ENCODE measurements at regions of chr1 and their contacts with region 1.

Region 1: DNA sequence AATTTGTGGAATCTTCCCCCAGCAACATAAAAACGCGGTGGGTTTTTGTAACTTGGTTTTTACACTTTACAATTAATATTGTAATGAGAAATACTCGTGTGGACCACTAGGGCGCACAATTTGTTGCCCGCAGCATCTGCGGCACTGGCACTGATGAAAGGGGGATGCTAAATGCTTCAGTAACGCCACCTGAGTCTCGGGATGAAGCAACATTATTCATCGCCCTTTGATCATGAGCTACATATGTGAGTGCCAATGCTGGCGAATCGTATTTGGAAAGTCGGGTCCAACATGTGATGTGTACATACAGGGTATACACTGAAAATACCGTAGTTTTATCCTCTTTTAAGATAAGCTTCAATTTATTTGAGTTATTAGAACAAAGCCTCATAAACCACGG is 34.2 kb upstream of the COX20 start:
- DNase-seq: no peak
- ATAC-seq: no peak
- H3K4me3 ChIP-seq: no peak overlapping the region
- H3K27ac ChIP-seq: no peak overlapping the region
- H3K4me1 ChIP-seq: no peaks in the 10 kb centered on the region
- H3K27me3 ChIP-seq: no peaks in the 10 kb centered on the region
- CTCF ChIP-seq: peak; percentile 18 to 64 (median 48)
- POLR2A ChIP-seq: no peak

Region 2: DNA sequence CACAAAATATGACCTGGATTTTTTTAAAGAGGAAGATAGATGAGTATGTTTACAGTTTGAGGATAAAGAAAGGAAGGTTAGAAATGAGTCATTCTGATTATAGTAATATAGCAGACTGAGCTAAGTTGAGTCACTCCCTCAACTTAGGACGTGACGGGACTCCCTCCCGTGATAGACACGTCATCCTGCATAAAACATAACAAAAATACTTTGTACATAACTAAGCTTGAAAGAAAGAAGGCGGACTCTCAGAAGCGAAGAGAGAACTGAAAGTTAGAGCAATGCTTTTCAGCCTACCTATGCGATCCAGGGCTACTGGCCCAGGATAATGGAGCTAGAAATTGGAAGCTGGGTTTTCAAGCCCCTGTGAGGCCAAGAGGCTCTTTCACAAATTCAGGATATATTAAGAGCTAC is 201.3 kb before region 1 on chr1:
- in situ Hi-C with region 1: loop called in 2 of 4 experiments (anchors 5 kb)
- intact Hi-C with region 1: loop called (anchors 1 kb)
- DNase-seq: peak in 1 of 2 donors; percentile 24
- ATAC-seq: peak; percentile 91 to 95
- H3K4me3 ChIP-seq: no peak overlapping the region
- H3K27ac ChIP-seq: peak overlapping the region in 2 of 4 donors; percentile 43 to 67
- H3K4me1 ChIP-seq: no peaks in the 10 kb centered on the region
- H3K27me3 ChIP-seq: no peaks in the 10 kb centered on the region
- CTCF ChIP-seq: no peak
- POLR2A ChIP-seq: peak in 1 of 2 donors; percentile 27

Region 3: GRCh38 chr1:244605835-244606370 is 195.3 kb before region 1 on chr1:
- in situ Hi-C with region 1: loop called in 2 of 4 experiments (anchors 5 kb)
- intact Hi-C with region 1: loop called (anchors 1 kb)
- DNase-seq: no peak
- ATAC-seq: no peak
- H3K4me3 ChIP-seq: no peak overlapping the region
- H3K27ac ChIP-seq: no peak overlapping the region
- H3K4me1 ChIP-seq: no peaks in the 10 kb centered on the region
- H3K27me3 ChIP-seq: no peaks in the 10 kb centered on the region
- CTCF ChIP-seq: no peak
- POLR2A ChIP-seq: no peak